K562 (cell line): ENCODE measurements at regions of chr17 and their contacts with region 1.

Region 1: GRCh38 chr17:77096570-77097214 is 44.1 kb upstream of the SEC14L1 start:
- DNase-seq: no peak
- ATAC-seq: peak; percentile 77
- H3K4me3 ChIP-seq: no peak overlapping the region
- H3K27ac ChIP-seq: no peak overlapping the region
- H3K4me1 ChIP-seq: peaks cover 0 to 2% of the 10 kb centered on the region in 2 experiments; a peak in 3 of 5 replicates
- H3K27me3 ChIP-seq: no peaks in the 10 kb centered on the region
- CTCF ChIP-seq: peak; percentile 53 to 88 (median 59); a peak in 5 of 6 replicates
- EP300 ChIP-seq: no peak
- POLR2A ChIP-seq: no peak
- RAD21 ChIP-seq: peak; percentile 66 to 91

Region 2: GRCh38 chr17:76997981-76998531 is 98.6 kb before region 1 on chr17:
- CTCF ChIA-PET with region 1: no interaction called
- POLR2A ChIA-PET with region 1: no interaction called
- in situ Hi-C with region 1: no loop called
- intact Hi-C with region 1: no loop called
- DNase-seq: no peak
- ATAC-seq: no peak
- H3K4me3 ChIP-seq: no peak overlapping the region
- H3K27ac ChIP-seq: no peak overlapping the region
- H3K4me1 ChIP-seq: no peaks in the 10 kb centered on the region
- H3K27me3 ChIP-seq: peaks cover 33 to 76% of the 10 kb centered on the region in 2 experiments; a peak in 4 of 5 replicates
- CTCF ChIP-seq: no peak
- EP300 ChIP-seq: no peak
- POLR2A ChIP-seq: no peak
- RAD21 ChIP-seq: no peak

Region 3: DNA sequence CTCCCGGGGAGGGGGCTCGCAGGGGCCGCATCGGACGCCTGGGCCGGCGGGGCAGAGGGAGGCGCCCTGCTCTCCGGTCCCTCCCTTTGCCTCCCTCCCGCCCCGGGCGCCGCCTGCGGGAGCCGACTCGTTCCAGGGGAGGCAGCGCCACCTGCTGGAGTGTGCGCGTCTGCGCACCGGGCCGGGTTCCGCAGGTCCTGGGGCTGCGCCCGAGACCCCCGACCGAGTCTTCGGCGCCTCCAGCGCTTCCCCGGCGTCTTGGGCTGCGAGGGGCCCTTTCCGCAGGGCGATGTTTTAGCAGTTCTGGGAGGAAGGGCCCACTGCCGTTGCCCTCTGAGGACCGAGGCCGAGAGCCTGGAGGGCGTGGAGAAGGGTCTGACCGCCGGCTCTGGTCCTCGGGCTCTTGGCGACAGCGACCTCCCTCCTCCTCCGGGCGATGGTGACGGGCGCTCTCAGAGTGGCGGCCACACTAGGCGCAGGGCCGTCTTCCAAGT is 150.4 kb after region 1 on chr17:
- CTCF ChIA-PET with region 1: interaction called, 12 read pairs
- POLR2A ChIA-PET with region 1: no interaction called
- in situ Hi-C with region 1: no loop called
- intact Hi-C with region 1: no loop called
- DNase-seq: peak; percentile 88 to 93 (median 91)
- ATAC-seq: peak; percentile 98
- H3K4me3 ChIP-seq: peak overlapping the region; percentile 41
- H3K27ac ChIP-seq: no peak overlapping the region
- H3K4me1 ChIP-seq: peaks cover 0 to 19% of the 10 kb centered on the region in 2 experiments; a peak in 2 of 5 replicates
- H3K27me3 ChIP-seq: peaks cover 12 to 25% of the 10 kb centered on the region in 2 experiments; a peak in 4 of 5 replicates
- CTCF ChIP-seq: peak; percentile 79 to 92 (median 86)
- EP300 ChIP-seq: no peak
- POLR2A ChIP-seq: no peak
- RAD21 ChIP-seq: peak; percentile 95 to 97